ENCODE measurements at regions of chr21 and their contacts with region 1.

Region 1: DNA sequence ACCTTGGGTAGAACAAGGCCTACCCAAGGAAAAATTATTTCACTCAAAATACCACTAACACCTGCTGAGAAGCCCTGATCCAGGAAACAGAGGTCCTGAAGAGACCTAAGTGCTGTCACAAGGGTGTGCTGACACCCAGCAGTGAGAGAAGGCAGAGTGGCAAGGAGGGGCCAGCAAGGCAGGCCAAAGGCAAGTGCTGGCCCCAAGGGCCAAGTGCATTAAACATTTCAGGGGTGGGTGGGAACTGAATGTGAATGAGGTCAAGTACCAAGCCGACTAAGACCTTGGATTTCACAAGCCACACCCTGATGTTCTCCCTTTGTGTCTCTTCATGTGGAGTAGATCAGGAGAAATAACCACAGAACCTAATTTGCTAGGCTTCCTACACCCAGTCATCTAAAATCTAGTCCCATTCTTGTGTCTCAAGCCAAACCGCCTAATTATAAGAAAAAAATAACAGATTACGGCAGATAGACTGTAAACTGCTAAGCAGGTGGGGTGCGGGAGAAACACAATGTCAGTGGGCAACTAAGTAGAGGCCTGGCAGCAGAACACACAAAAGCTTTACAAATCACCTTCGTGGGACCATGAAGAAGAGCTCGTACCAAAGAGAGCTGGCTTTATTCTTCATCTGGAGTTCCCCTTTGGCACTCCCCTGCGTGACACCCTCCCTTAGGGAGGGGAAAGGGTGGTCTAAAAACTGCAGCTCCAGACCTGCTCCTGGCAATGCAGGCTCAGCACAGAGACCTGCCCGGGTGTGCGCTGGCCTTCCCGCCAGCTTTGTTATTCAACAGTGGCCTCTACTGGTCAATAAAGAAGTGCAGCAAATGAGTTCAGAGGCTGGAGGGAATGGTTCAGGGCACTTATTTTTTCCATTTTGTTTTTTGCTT is 8.7 kb downstream of the UBE2G2 start:
- DNase-seq: peak; percentile 52
- ATAC-seq: peak; percentile 96
- H3K4me3 Mint-ChIP-seq: no peak overlapping the region
- H3K27ac Mint-ChIP-seq: peak overlapping the region; percentile 80
- H3K4me1 Mint-ChIP-seq: peaks cover 24% of the 10 kb centered on the region
- H3K27me3 Mint-ChIP-seq: no peaks in the 10 kb centered on the region
- CTCF ChIP-seq: peak; percentile 54

Region 2: DNA sequence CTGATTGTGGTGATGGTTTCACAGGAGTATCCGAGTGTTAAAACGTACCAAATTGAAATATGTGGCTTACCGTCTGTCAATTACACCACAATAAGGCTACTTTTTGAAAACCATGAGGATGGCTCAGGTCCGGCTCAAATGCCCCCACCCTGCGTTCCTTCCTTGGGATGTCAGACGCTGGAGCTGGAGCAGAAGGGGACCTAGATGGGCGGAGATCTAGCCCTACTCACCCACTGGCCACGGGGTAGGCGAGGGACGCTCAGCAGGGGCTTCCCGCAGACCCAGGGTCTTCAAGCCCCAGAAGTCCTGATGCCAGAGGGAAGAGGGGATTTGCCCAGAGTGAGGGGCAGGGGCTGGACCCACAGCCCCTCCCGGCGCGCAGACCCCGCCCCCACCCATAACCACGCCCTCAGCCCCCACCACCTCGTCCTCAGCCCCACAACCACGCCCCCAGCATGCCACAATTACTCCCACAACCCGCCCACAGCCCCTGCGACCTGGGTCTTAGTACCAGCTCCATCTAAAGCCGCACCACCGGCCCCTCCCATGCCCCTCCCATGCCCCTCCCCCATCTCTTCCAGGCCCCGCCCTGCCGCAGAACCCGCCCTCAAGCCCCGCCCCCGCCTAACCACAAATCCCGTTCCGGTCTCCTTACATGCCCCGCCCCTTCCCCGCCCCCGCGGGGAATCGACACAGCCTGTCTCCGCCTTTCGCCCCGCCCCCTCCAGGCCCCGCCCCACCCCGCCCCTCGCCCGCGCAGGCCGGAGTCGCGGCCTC is 338.0 kb before region 1 on chr21 and contains the start of gene LRRC3:
- CTCF ChIA-PET with region 1: interaction called, 13 read pairs
- POLR2A ChIA-PET with region 1: no interaction called
- DNase-seq: peak; percentile 96
- ATAC-seq: peak; percentile 97
- H3K4me3 Mint-ChIP-seq: peak within 1 kb of the TSS; percentile 69
- H3K27ac Mint-ChIP-seq: no peak within 1 kb of the TSS
- H3K4me1 Mint-ChIP-seq: peaks cover 4% of the 10 kb centered on the region; the same call in 1 of the 2 replicates
- H3K27me3 Mint-ChIP-seq: peaks cover 17% of the 10 kb centered on the region
- CTCF ChIP-seq: no peak
- total RNA-seq, gene LRRC3: 4.4 to 5.7 TPM (median 4.7 TPM) in 3 replicates

Region 3: DNA sequence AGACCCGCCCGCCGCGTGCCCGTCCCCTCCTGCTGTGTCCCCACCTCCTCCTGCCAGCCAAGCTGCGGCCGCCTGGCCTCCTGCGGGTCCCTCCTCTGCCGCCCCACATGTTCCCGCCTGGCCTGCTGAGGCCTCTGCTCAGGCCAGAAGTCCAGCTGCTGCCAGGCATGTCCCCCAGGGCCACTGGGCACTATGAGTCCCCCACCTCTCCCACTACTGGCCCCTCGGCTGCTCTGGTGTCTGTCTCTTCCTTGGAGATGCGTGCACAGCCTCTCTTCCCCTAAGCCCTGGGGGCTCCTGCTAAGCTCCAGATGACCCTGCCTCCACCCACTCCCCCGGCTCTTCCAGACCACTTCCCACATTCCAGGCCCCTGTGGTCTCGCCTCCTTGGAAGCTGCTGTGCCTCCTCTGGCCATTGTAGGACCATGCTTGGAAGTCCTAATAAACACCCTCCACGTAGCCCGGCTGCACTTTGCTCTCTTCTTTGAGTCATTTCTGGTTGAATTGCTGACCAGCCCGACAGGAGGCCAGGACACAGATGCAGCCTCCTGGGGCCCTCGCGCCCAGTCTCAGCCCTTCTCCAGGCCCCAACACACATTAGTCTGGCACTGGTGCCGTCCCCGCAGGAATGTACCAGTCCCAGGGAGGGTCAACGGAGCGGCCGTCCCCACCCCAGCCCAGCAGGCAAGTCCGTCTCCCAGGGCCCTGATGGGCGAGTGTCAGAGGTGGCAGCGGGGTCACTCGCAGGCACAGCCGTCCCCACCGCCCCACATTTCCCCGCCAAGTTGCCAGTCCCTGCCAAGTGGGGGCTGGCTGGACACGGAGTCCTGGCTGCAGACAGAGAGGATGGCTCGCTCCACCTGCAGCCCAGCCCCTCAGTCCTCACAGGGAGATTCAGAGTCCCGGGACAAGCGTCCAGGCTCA is 94.9 kb before region 1 on chr21:
- CTCF ChIA-PET with region 1: interaction called, 11 read pairs
- POLR2A ChIA-PET with region 1: interaction called, 3 read pairs
- DNase-seq: no peak
- ATAC-seq: peak; percentile 66
- H3K4me3 Mint-ChIP-seq: no peak overlapping the region
- H3K27ac Mint-ChIP-seq: peak overlapping the region; percentile 27; the same call in 1 of the 2 replicates
- H3K4me1 Mint-ChIP-seq: peaks cover 76% of the 10 kb centered on the region
- H3K27me3 Mint-ChIP-seq: peaks cover 4% of the 10 kb centered on the region
- CTCF ChIP-seq: no peak

Region 4: GRCh38 chr21:44718571-44718970 is 74.4 kb before region 1 on chr21:
- CTCF ChIA-PET with region 1: interaction called, 12 read pairs
- POLR2A ChIA-PET with region 1: no interaction called
- DNase-seq: peak; percentile 61
- ATAC-seq: peak; percentile 93
- H3K4me3 Mint-ChIP-seq: no peak overlapping the region
- H3K27ac Mint-ChIP-seq: peak overlapping the region; percentile 13
- H3K4me1 Mint-ChIP-seq: peaks cover 46% of the 10 kb centered on the region
- H3K27me3 Mint-ChIP-seq: peaks cover 30% of the 10 kb centered on the region
- CTCF ChIP-seq: no peak

Region 5: DNA sequence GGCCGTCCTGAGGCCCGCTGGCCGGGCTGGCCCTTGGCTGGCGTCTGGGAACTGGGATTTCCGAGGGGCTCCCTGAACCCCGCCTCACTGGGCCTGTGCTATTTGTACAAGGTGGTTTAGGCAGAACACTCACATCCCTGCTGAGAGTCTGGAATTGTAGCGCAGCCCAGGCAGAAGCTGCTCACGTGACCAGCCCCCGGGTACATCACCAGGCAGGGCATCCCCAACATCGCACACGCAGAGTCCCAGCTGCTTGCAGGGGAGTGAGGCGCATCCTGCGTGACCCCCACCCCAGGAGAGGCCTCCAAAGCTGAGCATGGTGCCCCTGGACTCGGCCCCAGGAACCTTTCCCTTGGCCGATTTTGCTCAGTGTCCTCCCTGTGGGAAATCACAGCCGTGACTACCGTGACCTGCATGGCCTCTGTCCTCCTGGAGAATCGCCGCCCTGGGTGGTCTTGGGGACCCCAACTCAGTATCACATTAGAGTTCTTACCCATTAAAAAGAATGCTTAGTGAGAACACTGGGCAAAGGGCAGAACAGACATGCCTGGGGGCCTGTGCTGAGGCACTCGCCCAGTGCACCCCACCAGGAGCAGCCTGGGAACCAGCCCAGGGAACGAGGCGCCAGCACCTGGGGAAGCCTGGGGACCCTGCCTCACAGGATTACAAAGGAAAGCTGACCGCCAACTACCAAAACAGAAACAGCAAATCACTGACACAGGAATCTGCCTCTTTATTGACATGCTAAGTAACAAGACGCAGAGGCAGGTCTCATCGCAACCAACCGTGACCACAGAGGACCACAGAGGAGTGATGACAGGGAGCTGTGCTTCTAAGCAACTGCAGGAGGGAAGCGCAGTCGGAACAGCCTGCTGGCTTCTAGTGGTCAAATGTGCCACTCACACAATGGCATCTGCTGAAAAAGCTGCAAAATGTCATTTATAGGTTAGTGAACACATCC is 24.8 kb before region 1 on chr21:
- CTCF ChIA-PET with region 1: interaction called, 23 read pairs
- POLR2A ChIA-PET with region 1: no interaction called
- DNase-seq: no peak
- ATAC-seq: peak; percentile 61
- H3K4me3 Mint-ChIP-seq: no peak overlapping the region
- H3K27ac Mint-ChIP-seq: peak overlapping the region; percentile 80
- H3K4me1 Mint-ChIP-seq: peaks cover 40% of the 10 kb centered on the region
- H3K27me3 Mint-ChIP-seq: no peaks in the 10 kb centered on the region
- CTCF ChIP-seq: no peak